Posterior cingulate gyrus (tissue), 11 donors: ENCODE measurements at regions of chr12 and their contacts with region 1.

Region 1: DNA sequence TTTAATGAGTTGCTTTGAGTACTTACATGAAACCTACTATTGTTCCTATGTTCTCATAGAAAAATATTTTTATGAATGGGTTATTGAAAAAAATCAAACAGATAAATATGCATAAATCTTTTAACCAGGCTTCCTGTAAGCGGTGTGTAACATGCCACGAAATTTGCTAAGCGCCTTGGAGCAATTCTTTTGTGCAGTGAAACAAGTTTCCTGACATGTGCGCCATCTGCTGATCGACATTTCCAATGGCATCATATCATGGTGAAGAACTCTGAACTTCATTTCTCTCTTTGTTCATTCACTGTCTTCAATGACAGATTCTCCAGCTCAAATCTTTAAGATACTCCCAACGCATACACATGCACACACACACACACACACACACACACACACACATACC is 145.6 kb upstream of the NAV3 start:
- DNase-seq: peak in 9 of 10 donors; percentile 14 to 91 (median 59)

Region 2: DNA sequence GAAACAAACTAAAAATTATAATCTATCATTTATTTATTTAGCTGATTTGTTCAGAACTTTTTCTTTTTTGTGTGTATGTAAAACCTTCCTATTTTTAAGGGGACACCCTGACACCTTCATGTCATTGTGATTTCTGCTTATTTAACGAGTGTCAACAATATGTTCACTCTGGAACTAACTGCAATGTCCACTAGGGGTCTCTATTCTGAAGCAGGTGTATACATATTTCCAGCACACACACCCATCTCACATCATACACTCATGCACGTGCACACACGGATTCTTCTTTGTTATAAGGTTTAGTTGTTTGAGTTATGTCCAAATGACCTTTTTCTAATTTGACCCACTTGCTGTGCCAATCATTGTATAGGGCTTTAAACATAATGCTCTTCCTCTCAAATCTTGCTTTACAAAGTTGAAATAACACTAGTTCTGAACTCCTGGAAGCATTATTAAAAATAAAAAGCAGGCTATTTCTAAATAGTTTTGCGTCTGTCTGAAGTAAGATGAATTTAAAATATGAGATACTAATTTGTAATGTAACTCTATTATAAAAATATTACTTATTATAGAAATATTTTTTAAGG is 635.3 kb before region 1 on chr12:
- intact Hi-C with region 1: loop called (anchors 10 kb)
- DNase-seq: no peak

Region 3: DNA sequence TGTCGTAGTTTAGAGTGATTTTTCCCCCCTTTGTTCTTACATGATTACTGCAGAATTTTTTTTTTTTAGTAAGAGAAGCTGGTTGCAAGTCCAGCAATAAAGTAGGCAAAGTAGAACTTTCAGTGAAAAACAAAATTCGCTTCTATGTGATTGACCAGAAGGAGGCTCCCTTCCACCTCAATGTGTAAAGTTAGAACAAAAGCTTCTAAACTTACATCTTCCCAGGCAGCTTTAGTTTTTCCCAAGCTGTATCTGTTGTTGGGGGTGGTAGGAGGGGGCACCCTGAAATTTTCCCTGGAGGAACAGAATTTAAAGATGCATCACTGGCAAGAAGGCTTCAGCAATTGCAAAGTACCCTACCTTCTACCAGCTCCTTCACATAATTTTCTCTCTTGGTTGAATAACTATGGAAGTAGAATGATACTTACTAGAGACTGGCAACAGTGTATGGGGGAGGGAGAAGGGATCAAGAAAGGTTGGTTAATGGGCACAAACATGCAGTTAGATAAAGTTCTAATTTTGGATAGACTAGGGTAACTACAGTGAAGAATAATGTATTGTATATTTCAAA is 532.4 kb before region 1 on chr12:
- intact Hi-C with region 1: loop called (anchors 5 kb)
- DNase-seq: no peak

Region 4: DNA sequence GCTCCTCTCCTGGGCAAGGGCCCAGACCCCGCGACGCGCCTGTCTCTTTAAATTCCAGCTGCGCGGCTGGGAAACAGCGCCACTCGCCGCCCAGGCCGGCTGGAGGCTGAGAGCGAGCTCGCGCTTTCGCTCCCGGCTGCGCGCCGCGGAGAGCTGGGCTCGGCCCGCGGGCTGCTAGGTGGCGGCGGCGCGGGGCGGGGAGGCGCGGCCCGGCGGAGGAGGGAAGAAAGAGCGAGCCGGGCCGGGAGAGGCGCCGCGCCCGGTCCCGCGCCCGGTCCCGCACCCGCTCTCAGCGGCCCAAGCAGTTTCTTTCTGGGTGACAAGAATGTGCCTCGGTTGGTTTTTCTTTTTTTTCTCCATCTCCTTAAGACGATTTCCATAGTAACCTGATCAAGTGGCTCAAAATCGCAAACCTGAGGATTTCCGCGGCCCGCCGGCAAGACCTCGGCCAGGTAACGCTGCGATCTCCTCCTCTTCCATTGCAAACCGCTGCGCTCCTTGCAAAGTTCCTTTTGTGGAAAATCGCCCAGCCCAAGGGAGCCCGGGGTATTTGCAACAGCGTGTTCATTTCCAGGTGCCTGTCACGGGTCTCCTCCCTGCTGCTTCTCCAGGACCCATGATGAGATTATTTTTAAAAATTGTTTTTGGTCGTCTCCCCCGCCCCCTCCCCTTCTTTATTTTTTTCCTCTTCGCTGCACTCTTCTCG is 360.2 kb before region 1 on chr12:
- intact Hi-C with region 1: loop called (anchors 10 kb)
- DNase-seq: peak; percentile 55 to 96 (median 77)

Region 5: GRCh38 chr12:77537648-77538047 is 147.5 kb before region 1 on chr12:
- intact Hi-C with region 1: loop called (anchors 10 kb)
- DNase-seq: no peak